HepG2 (cell line): ENCODE measurements at regions of chr2 and their contacts with region 1.

Region 1: GRCh38 chr2:226030788-226031646 is 631.5 kb downstream of the NYAP2 start:
- DNase-seq: peak; percentile 73
- ATAC-seq: peak; percentile 97
- H3K4me3 ChIP-seq: peak overlapping the region; percentile 58 to 78 (median 65)
- H3K27ac ChIP-seq: peak overlapping the region; percentile 72
- H3K4me1 ChIP-seq: peaks cover 38% of the 10 kb centered on the region
- H3K27me3 ChIP-seq: no peaks in the 10 kb centered on the region
- CTCF ChIP-seq: no peak
- EP300 ChIP-seq: peak in 1 of 2 experiments; percentile 56; a peak in 1 of 4 replicates
- POLR2A ChIP-seq: peak; percentile 53 to 85; a peak in 3 of 4 replicates
- RAD21 ChIP-seq: peak; percentile 13; the same call in 1 of the 2 replicates

Region 2: GRCh38 chr2:226059961-226060627 is 29.1 kb after region 1 on chr2:
- CTCF ChIA-PET with region 1: no interaction called
- POLR2A ChIA-PET with region 1: interaction called, 3 read pairs
- in situ Hi-C with region 1: no loop called
- intact Hi-C with region 1: loop called (anchors 2 kb)
- DNase-seq: peak; percentile 68
- ATAC-seq: peak; percentile 57
- H3K4me3 ChIP-seq: no peak overlapping the region
- H3K27ac ChIP-seq: peak overlapping the region; percentile 25
- H3K4me1 ChIP-seq: peaks cover 29% of the 10 kb centered on the region
- H3K27me3 ChIP-seq: no peaks in the 10 kb centered on the region; a peak in 1 of 5 replicates
- CTCF ChIP-seq: no peak
- EP300 ChIP-seq: peak in 1 of 2 experiments; percentile 48; a peak in 1 of 4 replicates
- POLR2A ChIP-seq: no peak
- RAD21 ChIP-seq: no peak

Region 3: DNA sequence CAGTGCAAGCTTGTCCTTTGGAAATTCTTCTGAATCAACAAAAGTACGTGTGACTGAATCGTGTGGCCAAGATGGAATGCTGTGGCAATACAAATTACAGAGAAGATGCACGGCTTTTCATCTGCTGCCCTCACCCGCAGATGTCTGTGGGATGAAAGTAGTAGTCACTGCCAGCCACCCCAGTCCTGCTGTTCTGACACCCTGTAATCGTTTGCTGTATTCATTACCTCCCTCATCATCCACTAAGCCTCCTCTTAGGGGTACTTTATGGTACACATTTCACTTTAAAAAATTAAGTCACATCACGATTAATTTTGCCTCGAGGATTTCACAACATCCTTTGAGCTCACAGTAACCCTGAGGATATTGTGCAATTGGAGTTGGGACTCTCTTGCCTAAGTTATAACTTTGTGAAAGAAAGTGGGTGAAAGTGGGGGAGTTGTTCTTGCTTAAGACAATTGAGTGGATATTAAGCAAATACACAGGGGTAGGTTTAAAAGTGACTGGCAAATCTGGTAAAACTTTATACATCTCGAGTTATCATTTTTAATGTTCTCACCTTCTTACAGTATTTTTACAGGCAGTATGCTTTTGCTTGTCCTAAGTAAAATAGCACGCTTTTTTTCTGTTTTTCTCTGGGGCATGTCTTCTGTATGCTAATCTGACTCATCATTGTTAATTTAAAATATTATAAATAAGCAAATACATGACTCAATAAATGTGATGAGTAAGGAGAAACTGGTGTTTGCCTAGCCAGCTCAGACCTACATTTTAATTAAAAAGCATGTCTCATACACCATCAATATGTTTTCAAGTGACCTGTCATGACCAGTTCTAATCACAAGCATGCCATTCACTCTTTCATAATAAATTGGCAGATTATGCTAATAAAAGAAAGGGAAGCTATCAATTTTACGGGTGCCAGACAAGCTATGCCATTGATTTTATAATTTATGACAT is 87.7 kb after region 1 on chr2:
- CTCF ChIA-PET with region 1: no interaction called
- POLR2A ChIA-PET with region 1: interaction called, 6 read pairs
- in situ Hi-C with region 1: no loop called
- intact Hi-C with region 1: loop called (anchors 5 kb)
- DNase-seq: peak; percentile 81
- ATAC-seq: peak; percentile 81
- H3K4me3 ChIP-seq: peak overlapping the region; percentile 42 to 51 (median 42); a peak in 5 of 6 replicates
- H3K27ac ChIP-seq: peak overlapping the region; percentile 54
- H3K4me1 ChIP-seq: peaks cover 65% of the 10 kb centered on the region
- H3K27me3 ChIP-seq: no peaks in the 10 kb centered on the region
- CTCF ChIP-seq: no peak
- EP300 ChIP-seq: peak; percentile 88 to 94; a peak in 3 of 4 replicates
- POLR2A ChIP-seq: no peak
- RAD21 ChIP-seq: no peak

Region 4: DNA sequence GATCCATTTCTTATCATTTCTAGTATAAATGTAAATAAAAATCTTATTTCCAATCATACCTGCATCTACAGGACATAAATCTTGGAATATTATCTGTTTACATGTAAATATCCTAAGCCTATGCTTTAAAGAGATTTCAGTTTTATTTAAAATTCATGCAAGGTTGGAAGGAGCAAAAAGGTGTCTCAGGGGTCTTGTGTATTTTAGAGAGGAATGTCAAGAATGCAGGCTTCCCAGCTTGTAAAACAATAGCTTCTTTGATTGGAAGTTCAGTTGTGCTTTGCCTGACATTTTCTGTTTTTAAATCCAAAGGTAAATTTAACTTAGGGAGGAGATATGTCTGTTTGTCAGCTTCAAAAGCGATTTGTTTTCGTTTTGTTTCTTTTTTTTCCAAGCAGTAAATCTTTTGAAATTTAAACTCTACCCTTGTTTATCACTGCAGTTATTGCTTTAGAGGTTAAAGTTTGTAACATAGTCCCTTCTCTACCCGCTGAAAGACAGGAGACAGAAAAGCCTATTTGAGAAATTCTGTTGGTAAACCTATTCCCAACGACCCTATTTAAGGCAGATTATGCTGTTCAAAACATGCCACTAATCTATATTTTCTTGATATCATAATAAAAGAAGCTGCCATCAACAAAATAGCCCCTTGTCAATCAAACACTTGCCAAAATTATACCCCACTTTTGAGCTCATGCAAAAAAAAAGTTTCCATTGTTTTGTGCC is 128.9 kb after region 1 on chr2:
- CTCF ChIA-PET with region 1: no interaction called
- POLR2A ChIA-PET with region 1: interaction called, 14 read pairs
- in situ Hi-C with region 1: no loop called
- intact Hi-C with region 1: no loop called
- DNase-seq: peak; percentile 99
- ATAC-seq: peak; percentile 97
- H3K4me3 ChIP-seq: peak overlapping the region in 2 of 3 experiments; percentile 3 to 14; a peak in 1 of 6 replicates
- H3K27ac ChIP-seq: peak overlapping the region; percentile 97
- H3K4me1 ChIP-seq: peaks cover 73% of the 10 kb centered on the region
- H3K27me3 ChIP-seq: no peaks in the 10 kb centered on the region; a peak in 1 of 5 replicates
- CTCF ChIP-seq: no peak
- EP300 ChIP-seq: peak; percentile 94 to 100; a peak in 3 of 4 replicates
- POLR2A ChIP-seq: no peak
- RAD21 ChIP-seq: 0 out of 2 replicates have a peak, but pooled peaks have one; percentile 9

Region 5: GRCh38 chr2:226215902-226216503 is 185.0 kb after region 1 on chr2:
- CTCF ChIA-PET with region 1: no interaction called
- POLR2A ChIA-PET with region 1: no interaction called
- in situ Hi-C with region 1: no loop called
- intact Hi-C with region 1: loop called (anchors 5 kb)
- DNase-seq: peak; percentile 63
- ATAC-seq: peak; percentile 99
- H3K4me3 ChIP-seq: no peak overlapping the region
- H3K27ac ChIP-seq: no peak overlapping the region
- H3K4me1 ChIP-seq: 0 out of 2 replicates have a peak, but pooled peaks cover 5% of the 10 kb centered on the region
- H3K27me3 ChIP-seq: no peaks in the 10 kb centered on the region
- CTCF ChIP-seq: peak; percentile 89
- EP300 ChIP-seq: peak in 1 of 2 experiments; percentile 45; a peak in 1 of 4 replicates
- POLR2A ChIP-seq: no peak
- RAD21 ChIP-seq: peak; percentile 78